T-cell (primary cell): ENCODE measurements at regions of chr16 and their contacts with region 1.

Region 1: DNA sequence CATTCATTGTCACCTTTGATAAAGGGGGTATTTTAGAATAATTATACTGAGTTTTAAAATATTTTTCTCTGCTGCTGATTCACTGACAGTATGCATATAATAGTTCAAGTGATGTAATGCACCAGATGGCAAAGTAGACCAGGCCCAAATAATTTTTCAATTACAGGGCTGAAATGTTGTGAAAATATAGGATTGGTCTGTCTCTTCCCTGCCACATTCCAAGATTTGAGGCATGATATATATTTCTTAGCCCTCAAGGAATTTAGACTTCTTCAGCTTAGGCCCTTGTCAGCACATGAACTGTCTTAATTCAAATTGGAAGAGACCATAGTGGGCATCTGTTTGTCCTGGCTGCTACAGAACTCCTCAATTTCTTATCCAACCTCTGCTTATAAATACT is 39.2 kb upstream of the SLC12A3 start:
- DNase-seq: no peak
- ATAC-seq: no peak
- H3K4me3 ChIP-seq: no peak overlapping the region
- H3K4me3 Mint-ChIP-seq: no peak overlapping the region
- H3K27ac ChIP-seq: no peak overlapping the region
- H3K27ac Mint-ChIP-seq: no peak overlapping the region
- H3K4me1 ChIP-seq: peaks cover 0 to 6% of the 10 kb centered on the region in 2 experiments
- H3K4me1 Mint-ChIP-seq: peaks cover 0 to 5% (median 0%) of the 10 kb centered on the region in 3 donors
- H3K27me3 ChIP-seq: no peaks in the 10 kb centered on the region
- H3K27me3 Mint-ChIP-seq: no peaks in the 10 kb centered on the region

Region 2: GRCh38 chr16:56425439-56425832 is 400.4 kb before region 1 on chr16 and contains the start of gene AMFR:
- CTCF ChIA-PET with region 1: no interaction called
- POLR2A ChIA-PET with region 1: no interaction called
- DNase-seq: peak; percentile 33 to 92 (median 60)
- ATAC-seq: peak; percentile 94 to 97 (median 96)
- H3K4me3 ChIP-seq: peak within 1 kb of the TSS; percentile 50 to 74
- H3K4me3 Mint-ChIP-seq: peak within 1 kb of the TSS; percentile 90 to 99 (median 98)
- H3K27ac ChIP-seq: peak within 1 kb of the TSS; percentile 27
- H3K27ac Mint-ChIP-seq: peak within 1 kb of the TSS; percentile 84 to 91
- H3K4me1 ChIP-seq: peaks cover 7 to 18% of the 10 kb centered on the region in 2 experiments
- H3K4me1 Mint-ChIP-seq: peaks cover 38 to 43% (median 42%) of the 10 kb centered on the region in 3 donors
- H3K27me3 ChIP-seq: no peaks in the 10 kb centered on the region
- H3K27me3 Mint-ChIP-seq: no peaks in the 10 kb centered on the region
- total RNA-seq, gene AMFR: 60.4 to 71.9 (median 68.4) TPM

Region 3: DNA sequence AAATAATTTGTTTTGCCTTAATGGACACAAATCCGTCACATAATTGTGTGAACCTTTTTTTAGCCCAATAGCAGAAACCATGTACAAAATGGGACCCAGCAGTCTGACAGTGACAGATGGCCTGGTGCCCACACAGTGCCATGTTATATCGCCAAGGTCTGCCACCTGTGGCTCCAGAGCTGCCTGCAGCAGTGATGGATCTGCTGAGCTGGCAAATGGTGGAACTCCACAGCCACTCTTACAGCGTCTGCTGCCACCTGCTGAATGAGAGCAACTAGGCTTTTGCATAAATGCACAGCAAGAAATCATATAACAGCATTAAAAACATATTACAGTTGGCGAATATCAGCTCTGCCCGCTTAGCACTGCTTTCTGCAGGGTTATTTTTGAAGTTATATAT is 36.5 kb before region 1 on chr16:
- CTCF ChIA-PET with region 1: interaction called in 1 of 2 experiments, 3 read pairs
- POLR2A ChIA-PET with region 1: interaction called in 1 of 2 experiments, 10 read pairs
- DNase-seq: peak in 20 of 35 experiments; percentile 2 to 39 (median 12)
- ATAC-seq: peak in 2 of 4 experiments; percentile 34 to 45
- H3K4me3 ChIP-seq: no peak overlapping the region
- H3K4me3 Mint-ChIP-seq: no peak overlapping the region
- H3K27ac ChIP-seq: no peak overlapping the region
- H3K27ac Mint-ChIP-seq: no peak overlapping the region
- H3K4me1 ChIP-seq: no peaks in the 10 kb centered on the region
- H3K4me1 Mint-ChIP-seq: peaks cover 0 to 7% (median under 1%) of the 10 kb centered on the region in 3 donors
- H3K27me3 ChIP-seq: no peaks in the 10 kb centered on the region
- H3K27me3 Mint-ChIP-seq: no peaks in the 10 kb centered on the region

Region 4: DNA sequence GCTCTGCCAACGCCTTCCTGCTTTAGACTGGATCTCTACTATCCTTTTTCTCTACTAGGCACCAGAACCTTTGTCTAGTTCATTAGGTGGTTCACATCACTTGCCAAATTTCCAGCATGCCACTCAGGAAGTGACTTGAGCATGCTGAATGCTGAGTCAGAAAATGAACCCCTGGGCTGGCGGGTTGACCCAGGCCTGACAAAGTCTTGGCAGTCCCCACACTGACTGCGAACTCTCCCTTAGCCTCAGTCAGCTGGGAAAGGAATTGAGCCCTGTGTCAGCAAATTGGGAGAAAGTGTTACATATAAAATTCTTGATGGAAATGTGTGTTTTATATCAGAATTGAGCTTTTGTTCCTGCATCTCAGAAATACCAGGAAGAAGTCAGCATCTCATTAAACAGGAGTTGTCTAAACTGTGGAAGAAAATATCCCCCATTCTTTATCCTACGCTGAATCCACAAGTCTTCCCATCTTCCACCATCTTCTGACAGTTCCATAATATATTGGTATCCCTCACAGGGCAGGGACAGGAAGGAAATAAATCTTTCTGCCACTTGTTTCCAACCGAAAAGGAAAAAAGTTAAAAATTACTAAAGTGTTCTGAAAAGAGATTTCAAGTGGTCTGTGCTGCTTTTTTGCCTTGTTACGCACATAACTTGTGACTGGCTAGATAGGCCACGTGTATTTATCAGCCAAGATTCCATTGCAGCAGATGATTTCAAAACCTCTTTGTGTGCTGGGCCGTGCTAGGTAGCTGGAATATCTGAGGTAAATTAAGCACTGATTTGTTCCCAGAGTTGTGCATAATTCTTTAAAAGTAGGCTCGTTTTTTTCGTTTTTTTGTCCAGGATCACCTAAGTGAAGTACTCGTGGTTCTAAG is 22.5 kb after region 1 on chr16:
- CTCF ChIA-PET with region 1: no interaction called
- POLR2A ChIA-PET with region 1: no interaction called
- DNase-seq: no peak
- ATAC-seq: no peak
- H3K4me3 ChIP-seq: no peak overlapping the region
- H3K4me3 Mint-ChIP-seq: peak overlapping the region in 1 of 3 donors; percentile 15
- H3K27ac ChIP-seq: peak overlapping the region; percentile 69
- H3K27ac Mint-ChIP-seq: peak overlapping the region; percentile 76 to 81
- H3K4me1 ChIP-seq: peaks cover 2 to 9% of the 10 kb centered on the region in 2 experiments
- H3K4me1 Mint-ChIP-seq: peaks cover 20 to 33% (median 28%) of the 10 kb centered on the region in 3 donors
- H3K27me3 ChIP-seq: no peaks in the 10 kb centered on the region
- H3K27me3 Mint-ChIP-seq: no peaks in the 10 kb centered on the region